B cell (primary cell): ENCODE measurements at regions of chr16 and their contacts with region 1.

Region 1: GRCh38 chr16:19067349-19068236 is at the start of gene COQ7:
- DNase-seq: peak; percentile 100
- ATAC-seq: peak; percentile 90
- H3K4me3 ChIP-seq: peak within 1 kb of the TSS; percentile 78 to 91 (median 79)
- H3K4me3 Mint-ChIP-seq: peak within 1 kb of the TSS; percentile 91
- H3K27ac ChIP-seq: peak within 1 kb of the TSS; percentile 99 to 100
- H3K27ac Mint-ChIP-seq: peak within 1 kb of the TSS; percentile 99
- H3K4me1 ChIP-seq: peaks cover 8 to 14% of the 10 kb centered on the region in 2 donors
- H3K4me1 Mint-ChIP-seq: peaks cover 14% of the 10 kb centered on the region
- H3K27me3 ChIP-seq: no peaks in the 10 kb centered on the region
- H3K27me3 Mint-ChIP-seq: peaks cover 8% of the 10 kb centered on the region
- CTCF ChIP-seq: no peak
- total RNA-seq, gene COQ7: 19.4 and 19.5 TPM in 2 replicates

Region 2: GRCh38 chr16:18789850-18790724 is 277.5 kb before region 1 on chr16 and contains the start of gene RPS15A:
- CTCF ChIA-PET with region 1: no interaction called
- POLR2A ChIA-PET with region 1: interaction called, 11 read pairs
- intact Hi-C with region 1: no loop called
- DNase-seq: peak; percentile 96
- ATAC-seq: peak; percentile 98
- H3K4me3 ChIP-seq: peak within 1 kb of the TSS; percentile 81 to 99 (median 96)
- H3K4me3 Mint-ChIP-seq: peak within 1 kb of the TSS; percentile 99
- H3K27ac ChIP-seq: peak within 1 kb of the TSS; percentile 77 to 79
- H3K27ac Mint-ChIP-seq: peak within 1 kb of the TSS; percentile 90
- H3K4me1 ChIP-seq: peaks cover 20 to 39% of the 10 kb centered on the region in 2 donors
- H3K4me1 Mint-ChIP-seq: peaks cover 44% of the 10 kb centered on the region
- H3K27me3 ChIP-seq: no peaks in the 10 kb centered on the region
- H3K27me3 Mint-ChIP-seq: no peaks in the 10 kb centered on the region
- CTCF ChIP-seq: no peak
- total RNA-seq, gene RPS15A: 2,146 and 2,321 TPM in 2 replicates

Region 3: GRCh38 chr16:19167710-19168370 is 100.2 kb after region 1 on chr16 and contains the start of gene SYT17:
- CTCF ChIA-PET with region 1: no interaction called
- POLR2A ChIA-PET with region 1: no interaction called
- intact Hi-C with region 1: loop called (anchors 5 kb)
- DNase-seq: peak; percentile 85
- ATAC-seq: peak; percentile 88
- H3K4me3 ChIP-seq: peak within 1 kb of the TSS in 4 of 5 experiments; percentile 50 to 69 (median 59)
- H3K4me3 Mint-ChIP-seq: peak within 1 kb of the TSS; percentile 85
- H3K27ac ChIP-seq: peak within 1 kb of the TSS in 1 of 2 donors; percentile 3
- H3K27ac Mint-ChIP-seq: peak within 1 kb of the TSS; percentile 81
- H3K4me1 ChIP-seq: peaks cover 11 to 28% of the 10 kb centered on the region in 2 donors
- H3K4me1 Mint-ChIP-seq: peaks cover 30% of the 10 kb centered on the region
- H3K27me3 ChIP-seq: peaks cover 0 to 16% (median 0%) of the 10 kb centered on the region in 4 experiments
- H3K27me3 Mint-ChIP-seq: peaks cover 11% of the 10 kb centered on the region
- CTCF ChIP-seq: peak; percentile 82
- total RNA-seq, gene SYT17: 25.1 and 27.7 TPM in 2 replicates

Region 4: DNA sequence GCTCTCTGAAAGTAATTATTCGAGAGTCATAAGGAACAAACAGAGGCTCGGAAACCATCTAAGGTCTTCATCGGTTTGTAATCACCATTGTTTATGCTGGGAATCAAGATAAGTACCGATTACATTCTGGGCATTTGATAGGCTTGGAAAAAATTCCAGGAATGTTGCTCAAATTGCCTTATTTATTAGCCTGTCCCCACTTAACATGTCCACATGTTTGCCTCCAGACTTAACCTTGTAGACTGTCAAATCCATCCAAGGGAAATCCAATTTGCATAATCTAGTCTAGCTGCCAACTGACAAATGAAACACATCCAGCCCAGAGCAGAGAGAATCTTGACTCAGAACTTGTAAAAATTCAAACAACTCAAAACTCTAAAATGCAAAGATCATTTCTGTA is 298.8 kb after region 1 on chr16:
- CTCF ChIA-PET with region 1: no interaction called
- POLR2A ChIA-PET with region 1: no interaction called
- intact Hi-C with region 1: no loop called
- DNase-seq: no peak
- ATAC-seq: no peak
- H3K4me3 ChIP-seq: no peak overlapping the region
- H3K4me3 Mint-ChIP-seq: no peak overlapping the region
- H3K27ac ChIP-seq: no peak overlapping the region
- H3K27ac Mint-ChIP-seq: no peak overlapping the region
- H3K4me1 ChIP-seq: no peaks in the 10 kb centered on the region
- H3K4me1 Mint-ChIP-seq: no peaks in the 10 kb centered on the region
- H3K27me3 ChIP-seq: peaks cover 0 to 2% (median 0%) of the 10 kb centered on the region in 4 experiments
- H3K27me3 Mint-ChIP-seq: peaks cover 4% of the 10 kb centered on the region
- CTCF ChIP-seq: no peak

Region 5: GRCh38 chr16:20883558-20884556 is 1816.3 kb after region 1 on chr16:
- CTCF ChIA-PET with region 1: no interaction called
- POLR2A ChIA-PET with region 1: no interaction called
- intact Hi-C with region 1: no loop called
- DNase-seq: no peak
- ATAC-seq: no peak
- H3K4me3 ChIP-seq: no peak overlapping the region
- H3K4me3 Mint-ChIP-seq: no peak overlapping the region
- H3K27ac ChIP-seq: no peak overlapping the region
- H3K27ac Mint-ChIP-seq: no peak overlapping the region
- H3K4me1 ChIP-seq: no peaks in the 10 kb centered on the region
- H3K4me1 Mint-ChIP-seq: peaks cover 6% of the 10 kb centered on the region
- H3K27me3 ChIP-seq: no peaks in the 10 kb centered on the region
- H3K27me3 Mint-ChIP-seq: no peaks in the 10 kb centered on the region
- CTCF ChIP-seq: no peak